Posterior vena cava (tissue), 2 donors: ENCODE measurements at regions of chr1 and their contacts with region 1.

Region 1: GRCh38 chr1:245051349-245052221 is 103.2 kb upstream of the KIF26B start:
- DNase-seq: no peak

Region 2: DNA sequence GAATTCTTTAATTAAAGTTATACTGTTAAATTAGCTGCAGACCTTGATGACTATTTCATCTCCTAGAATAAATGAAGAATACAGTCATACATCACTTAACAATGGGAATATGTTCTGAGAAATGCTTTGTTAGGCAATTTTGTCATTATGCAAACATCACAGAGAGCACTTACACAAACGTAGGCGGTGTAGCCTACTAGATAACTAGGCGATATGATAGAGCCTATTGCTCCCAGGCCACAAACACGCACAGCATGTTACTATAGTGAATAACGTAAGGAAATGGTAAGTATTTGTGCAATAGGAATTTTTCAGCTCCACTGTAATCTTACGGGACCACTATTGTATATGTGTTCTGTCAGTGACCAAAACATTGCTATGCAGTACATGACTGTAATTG is 436.3 kb before region 1 on chr1:
- intact Hi-C with region 1: no loop called
- DNase-seq: no peak

Region 3: DNA sequence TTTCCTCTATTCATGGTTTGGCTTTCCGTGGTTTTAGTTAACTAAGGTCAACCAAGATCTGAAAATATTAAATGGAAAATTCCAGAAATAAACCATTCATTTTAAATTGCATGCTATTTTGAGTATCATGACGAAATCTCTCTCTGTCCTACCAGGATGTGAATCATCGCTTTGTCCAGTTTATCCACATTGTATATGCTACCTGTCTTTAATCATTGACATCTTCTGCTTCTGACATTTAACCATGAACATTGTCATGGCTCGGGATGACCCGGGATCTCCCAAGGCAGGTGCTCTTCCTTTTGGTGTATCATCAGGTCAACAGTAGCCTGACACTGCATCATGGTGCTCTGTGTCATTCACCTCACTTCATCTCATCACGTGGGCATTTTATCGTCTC is 61.8 kb before region 1 on chr1:
- intact Hi-C with region 1: loop called in 1 of 2 experiments (anchors 10 kb)
- DNase-seq: no peak